Activated CD4-positive, alpha-beta T cell treated with anti-CD3 and anti-CD28 coated beads for 36 hours (primary cell): ENCODE measurements at regions of chr12 and their contacts with region 1.

Region 1: GRCh38 chr12:118164798-118165486 is 29.0 kb downstream of the PEBP1 start:
- DNase-seq: peak; percentile 49
- ATAC-seq: no peak
- H3K4me3 Mint-ChIP-seq: no peak overlapping the region
- H3K27ac Mint-ChIP-seq: no peak overlapping the region
- H3K4me1 Mint-ChIP-seq: peaks cover 37% of the 10 kb centered on the region
- H3K27me3 Mint-ChIP-seq: no peaks in the 10 kb centered on the region

Region 2: DNA sequence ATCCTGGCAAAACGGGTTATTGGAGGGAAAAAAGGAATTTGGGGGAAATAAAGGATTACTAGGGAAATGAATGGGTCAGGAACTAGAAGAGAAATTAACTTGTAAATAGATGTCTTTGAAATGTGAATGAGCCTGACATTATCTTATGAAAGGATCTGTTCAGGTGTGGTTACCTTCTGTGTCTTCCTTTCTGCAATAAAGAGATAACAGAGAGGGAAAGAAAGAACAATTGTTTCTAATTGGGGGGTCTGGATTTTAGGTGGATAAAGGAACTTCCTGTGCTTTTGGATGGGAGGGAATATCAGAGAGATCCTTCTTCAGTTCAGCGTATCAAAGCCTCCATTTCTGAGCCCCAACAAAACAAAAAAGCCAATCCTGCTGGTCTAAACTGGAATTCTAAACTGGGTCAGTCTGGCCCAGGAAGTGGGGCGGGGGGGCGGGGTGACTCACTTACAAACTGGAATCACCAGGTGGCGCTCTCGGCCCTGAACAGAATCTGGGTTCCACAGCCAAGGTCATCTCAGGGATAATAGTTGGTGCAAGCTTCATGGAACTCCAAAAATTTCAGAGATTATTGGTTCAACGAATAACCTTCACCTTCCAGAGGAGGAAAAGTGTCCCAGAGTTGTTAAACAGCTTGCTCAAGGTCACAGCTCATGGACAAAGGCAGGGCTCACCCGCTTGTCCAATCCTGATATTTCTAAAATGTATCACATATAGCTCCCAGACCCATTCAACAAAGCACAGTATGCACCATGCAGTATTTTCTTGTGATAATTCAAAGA is 44.2 kb before region 1 on chr12:
- CTCF ChIA-PET with region 1: interaction called, 6 read pairs
- POLR2A ChIA-PET with region 1: no interaction called
- intact Hi-C with region 1: loop called in 1 of 2 experiments (anchors 1 kb)
- DNase-seq: peak; percentile 82
- ATAC-seq: peak; percentile 75
- H3K4me3 Mint-ChIP-seq: no peak overlapping the region
- H3K27ac Mint-ChIP-seq: peak overlapping the region; percentile 77
- H3K4me1 Mint-ChIP-seq: peaks cover 8% of the 10 kb centered on the region
- H3K27me3 Mint-ChIP-seq: no peaks in the 10 kb centered on the region

Region 3: GRCh38 chr12:118183705-118184104 is 18.8 kb after region 1 on chr12:
- CTCF ChIA-PET with region 1: interaction called, 24 read pairs
- POLR2A ChIA-PET with region 1: no interaction called
- intact Hi-C with region 1: no loop called
- DNase-seq: no peak
- ATAC-seq: no peak
- H3K4me3 Mint-ChIP-seq: no peak overlapping the region
- H3K27ac Mint-ChIP-seq: no peak overlapping the region
- H3K4me1 Mint-ChIP-seq: peaks cover 21% of the 10 kb centered on the region
- H3K27me3 Mint-ChIP-seq: no peaks in the 10 kb centered on the region

Region 4: GRCh38 chr12:118307069-118307954 is 142.4 kb after region 1 on chr12:
- CTCF ChIA-PET with region 1: no interaction called
- POLR2A ChIA-PET with region 1: no interaction called
- intact Hi-C with region 1: loop called in 1 of 2 experiments (anchors 1 kb)
- DNase-seq: peak; percentile 71
- ATAC-seq: peak; percentile 80
- H3K4me3 Mint-ChIP-seq: peak overlapping the region; percentile 66
- H3K27ac Mint-ChIP-seq: peak overlapping the region; percentile 92
- H3K4me1 Mint-ChIP-seq: peaks cover 43% of the 10 kb centered on the region
- H3K27me3 Mint-ChIP-seq: no peaks in the 10 kb centered on the region

Region 5: GRCh38 chr12:119375075-119375882 is 1210.3 kb after region 1 on chr12:
- CTCF ChIA-PET with region 1: no interaction called
- POLR2A ChIA-PET with region 1: no interaction called
- intact Hi-C with region 1: no loop called
- DNase-seq: no peak
- ATAC-seq: no peak
- H3K4me3 Mint-ChIP-seq: no peak overlapping the region
- H3K27ac Mint-ChIP-seq: no peak overlapping the region
- H3K4me1 Mint-ChIP-seq: no peaks in the 10 kb centered on the region
- H3K27me3 Mint-ChIP-seq: peaks cover 4% of the 10 kb centered on the region